AG04449 (cell line): ENCODE measurements at regions of chr19 and their contacts with region 1.

Region 1: DNA sequence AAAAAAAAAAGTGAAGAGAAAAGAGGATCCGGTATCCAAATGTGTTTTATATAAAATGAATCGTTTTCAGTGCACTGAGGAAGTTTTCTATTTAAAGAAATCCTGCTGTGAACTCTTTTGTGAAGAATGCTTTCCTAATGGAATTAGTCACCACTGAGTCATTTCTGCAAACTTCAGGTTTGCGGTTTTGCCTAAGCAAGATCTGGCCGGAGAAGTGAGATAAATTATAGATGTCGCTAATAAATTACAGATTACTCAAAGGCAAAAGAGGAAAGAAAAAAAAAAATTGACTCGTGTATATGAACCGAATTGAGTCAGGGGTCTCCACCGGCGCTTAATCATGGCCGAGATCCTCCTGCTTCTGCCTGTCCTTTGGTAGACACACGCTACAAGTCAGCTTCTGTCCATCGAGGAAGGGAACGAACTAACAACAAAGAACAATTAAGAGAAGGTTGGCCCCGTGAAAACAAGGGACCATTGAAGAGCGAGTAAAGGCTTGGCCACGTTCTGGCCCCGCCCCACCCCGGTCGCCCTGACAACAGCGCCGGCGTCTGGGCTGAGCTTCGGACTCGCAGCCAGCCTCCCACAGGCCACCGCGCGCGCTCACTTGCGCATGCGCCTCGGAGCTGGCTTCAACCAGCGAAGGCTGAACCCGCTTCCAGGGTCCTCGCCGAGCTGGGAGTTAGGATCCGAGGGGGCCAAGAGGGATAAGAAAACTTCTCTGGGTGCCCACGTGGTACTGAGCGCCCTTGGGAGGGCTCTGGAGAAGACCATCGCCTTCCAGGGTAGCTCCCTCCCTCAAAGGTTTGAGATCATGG is 33.0 kb upstream of the MRI1 start:
- DNase-seq: peak; percentile 90
- H3K4me3 ChIP-seq: peak overlapping the region; percentile 73
- CTCF ChIP-seq: no peak

Region 2: DNA sequence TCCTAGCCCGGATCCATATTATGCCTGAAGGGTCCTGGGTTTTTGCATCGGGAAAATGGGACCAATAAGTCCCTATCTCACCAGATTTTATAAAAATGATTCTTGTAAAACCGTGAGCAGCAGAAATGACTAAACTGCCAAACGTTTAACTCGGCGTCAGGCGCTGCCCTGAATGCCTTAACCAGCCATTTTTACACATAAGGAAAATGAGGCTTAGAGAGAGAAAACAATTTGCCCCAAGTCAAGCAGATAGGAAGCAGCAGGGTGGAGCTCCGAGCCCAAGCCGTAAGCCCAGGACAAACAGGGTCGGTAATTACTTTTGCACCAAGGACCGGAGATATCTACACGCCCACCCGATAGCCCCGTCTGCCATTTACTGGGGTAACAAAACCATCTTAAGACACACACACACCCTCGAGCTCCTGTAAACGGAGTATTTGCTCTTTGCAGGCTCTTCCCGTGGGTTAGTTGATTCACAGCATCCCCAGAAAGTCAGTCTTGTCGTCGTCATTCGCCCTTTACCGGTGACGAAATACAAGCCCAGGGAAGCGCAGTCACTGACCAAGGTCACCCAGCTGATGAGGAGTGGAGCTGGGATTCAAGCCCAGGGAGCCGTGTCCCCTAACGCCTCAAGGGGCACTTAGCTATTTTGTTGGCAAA is 16.9 kb after region 1 on chr19:
- CTCF ChIA-PET with region 1: interaction called, 4 read pairs
- POLR2A ChIA-PET with region 1: interaction called, 11 read pairs
- DNase-seq: no peak
- H3K4me3 ChIP-seq: peak overlapping the region; percentile 80
- CTCF ChIP-seq: no peak

Region 3: GRCh38 chr19:13794757-13795589 is 63.6 kb after region 1 on chr19 and contains the start of gene ZSWIM4:
- CTCF ChIA-PET with region 1: no interaction called
- POLR2A ChIA-PET with region 1: no interaction called
- DNase-seq: peak; percentile 95
- H3K4me3 ChIP-seq: peak within 1 kb of the TSS; percentile 94
- CTCF ChIP-seq: no peak